ENCODE measurements at regions of chr11 and their contacts with region 1.

Region 1: DNA sequence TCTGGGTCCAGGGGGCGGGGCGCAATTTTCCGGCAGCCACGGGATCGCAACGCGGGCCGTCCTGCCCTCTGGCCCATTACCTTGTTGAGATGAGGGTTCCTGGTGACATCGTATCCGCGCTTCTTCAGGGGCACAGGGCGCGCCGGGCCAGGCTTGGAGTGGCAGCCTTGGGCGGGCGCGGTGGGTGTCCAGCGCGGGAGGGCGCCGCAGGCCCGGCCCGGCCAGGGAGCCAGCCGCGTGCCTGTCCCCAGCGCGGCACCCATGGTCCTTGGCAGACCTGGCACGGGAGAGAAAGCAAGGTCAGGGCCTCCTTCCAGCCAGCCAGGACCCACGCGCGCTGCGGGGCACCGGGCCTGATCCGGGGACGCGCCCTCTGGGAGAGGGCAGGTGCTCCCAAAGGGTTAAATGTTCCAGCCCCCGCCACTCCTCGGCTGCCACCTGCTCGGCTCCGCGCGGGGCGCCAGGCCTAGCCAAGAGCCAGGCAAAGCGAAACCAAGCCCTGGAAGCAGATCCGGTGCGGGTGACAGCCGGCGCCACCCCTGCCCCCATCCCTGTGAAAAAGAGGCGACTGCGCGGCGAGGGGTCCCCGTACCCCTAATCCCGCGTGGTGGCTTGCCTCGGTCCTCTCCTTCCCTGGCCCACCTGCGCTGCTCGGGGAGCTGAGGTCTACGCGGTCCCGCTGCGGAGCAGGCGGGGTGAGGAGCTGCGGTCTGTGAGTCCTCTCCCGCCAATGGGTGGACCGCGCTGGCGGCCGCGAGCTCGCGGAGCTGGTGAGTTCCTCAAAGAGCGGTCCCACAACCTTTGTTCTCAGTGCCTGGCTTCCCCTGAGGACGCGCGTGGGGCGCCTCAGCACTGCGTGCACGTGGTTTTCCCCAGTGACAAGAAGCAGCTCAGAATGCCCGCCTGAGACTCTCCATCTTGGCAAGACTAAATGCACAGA is at the start of gene ME3:
- DNase-seq: peak; percentile 80
- H3K4me3 ChIP-seq: peak within 1 kb of the TSS; percentile 60 to 88 (median 85)
- H3K27ac ChIP-seq: peak within 1 kb of the TSS; percentile 91
- H3K4me1 ChIP-seq: peaks cover 31% of the 10 kb centered on the region
- H3K27me3 ChIP-seq: no peaks in the 10 kb centered on the region
- CTCF ChIP-seq: no peak
- POLR2A ChIP-seq: peak; percentile 80
- total RNA-seq, gene ME3: 26.9 and 27.2 TPM in 2 replicates

Region 2: DNA sequence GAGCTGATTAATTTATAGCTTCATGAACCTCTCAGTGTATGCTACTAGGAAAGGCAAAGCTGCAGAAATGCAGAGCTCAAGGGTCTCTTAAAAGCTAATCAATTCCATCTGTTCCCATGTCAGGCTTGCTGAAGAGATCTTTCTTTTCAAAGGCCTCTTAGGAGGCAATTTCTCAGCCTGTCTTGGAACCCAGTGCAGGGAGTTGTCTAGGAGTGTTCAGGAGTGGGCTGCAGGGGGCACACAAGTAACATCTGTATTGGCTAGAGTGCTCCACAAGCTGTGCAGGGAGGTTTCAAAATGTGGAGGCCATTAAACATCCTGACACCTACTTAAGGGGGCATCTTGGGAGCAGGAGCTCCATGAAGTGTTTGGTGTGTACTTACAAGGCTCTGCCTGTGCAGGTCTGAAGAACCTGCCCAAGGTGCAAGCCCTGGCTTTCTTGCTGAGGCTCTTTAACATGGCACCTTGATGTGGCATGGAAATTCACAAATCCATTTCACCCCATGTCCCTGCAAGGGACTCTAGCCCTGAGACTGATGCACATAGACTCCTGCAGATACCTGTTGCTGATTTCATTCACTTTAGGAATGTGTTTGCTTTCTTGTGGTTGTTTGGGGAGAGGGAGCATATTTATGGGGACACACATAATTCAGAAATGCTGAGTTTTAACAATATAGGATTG is 134.3 kb before region 1 on chr11:
- CTCF ChIA-PET with region 1: no interaction called
- POLR2A ChIA-PET with region 1: no interaction called
- dilution Hi-C with region 1: no loop called
- intact Hi-C with region 1: loop called (anchors 5 kb)
- DNase-seq: peak; percentile 64
- H3K4me3 ChIP-seq: no peak overlapping the region
- H3K27ac ChIP-seq: no peak overlapping the region
- H3K4me1 ChIP-seq: no peaks in the 10 kb centered on the region
- H3K27me3 ChIP-seq: no peaks in the 10 kb centered on the region
- CTCF ChIP-seq: peak; percentile 23 to 42
- POLR2A ChIP-seq: no peak

Region 3: DNA sequence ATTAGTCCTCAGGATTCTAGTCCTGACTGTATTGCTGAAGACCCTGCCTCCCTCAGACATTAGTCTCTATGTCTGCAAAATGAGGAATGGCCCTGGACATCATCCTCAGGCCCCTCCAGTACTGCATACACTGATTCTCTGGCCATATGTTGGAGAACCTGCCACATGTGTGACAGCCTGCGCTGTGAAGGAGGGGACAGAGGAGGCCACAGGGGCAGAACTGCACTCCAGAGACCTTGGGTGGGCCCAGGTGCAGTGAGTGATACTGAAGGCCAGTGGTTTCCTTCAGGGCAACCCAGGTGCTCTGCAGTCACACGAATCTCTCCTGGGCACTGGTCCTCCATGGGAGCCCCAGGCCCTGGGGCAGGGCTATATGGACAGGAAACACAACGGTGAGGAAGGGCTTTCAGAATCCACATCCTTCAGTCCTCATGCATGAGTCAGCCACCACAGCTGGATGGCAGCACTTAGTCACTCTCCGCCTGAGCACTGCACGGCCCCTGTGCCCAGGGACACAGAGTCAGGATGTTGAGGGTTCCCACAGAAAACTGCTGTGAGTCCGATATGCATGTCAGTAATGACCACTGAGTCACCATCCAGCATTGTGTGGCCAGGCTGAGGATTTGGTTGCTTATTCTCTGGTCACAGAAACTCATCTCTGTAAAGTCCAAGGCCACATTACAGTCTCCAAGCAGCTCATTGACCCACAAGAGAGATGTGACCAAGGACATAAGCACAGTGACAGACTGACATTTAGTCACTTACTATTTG is 39.3 kb before region 1 on chr11:
- CTCF ChIA-PET with region 1: no interaction called
- POLR2A ChIA-PET with region 1: no interaction called
- dilution Hi-C with region 1: no loop called
- intact Hi-C with region 1: loop called (anchors 1 kb)
- DNase-seq: peak; percentile 96
- H3K4me3 ChIP-seq: no peak overlapping the region
- H3K27ac ChIP-seq: peak overlapping the region; percentile 83
- H3K4me1 ChIP-seq: peaks cover 19% of the 10 kb centered on the region
- H3K27me3 ChIP-seq: no peaks in the 10 kb centered on the region
- CTCF ChIP-seq: peak in 1 of 2 donors; percentile 55
- POLR2A ChIP-seq: no peak

Region 4: GRCh38 chr11:86719781-86720463 is 48.0 kb after region 1 on chr11:
- CTCF ChIA-PET with region 1: no interaction called
- POLR2A ChIA-PET with region 1: no interaction called
- dilution Hi-C with region 1: no loop called
- intact Hi-C with region 1: loop called (anchors 1 kb)
- DNase-seq: peak; percentile 87
- H3K4me3 ChIP-seq: no peak overlapping the region
- H3K27ac ChIP-seq: peak overlapping the region; percentile 87
- H3K4me1 ChIP-seq: peaks cover 31% of the 10 kb centered on the region
- H3K27me3 ChIP-seq: no peaks in the 10 kb centered on the region
- CTCF ChIP-seq: no peak
- POLR2A ChIP-seq: no peak

Region 5: DNA sequence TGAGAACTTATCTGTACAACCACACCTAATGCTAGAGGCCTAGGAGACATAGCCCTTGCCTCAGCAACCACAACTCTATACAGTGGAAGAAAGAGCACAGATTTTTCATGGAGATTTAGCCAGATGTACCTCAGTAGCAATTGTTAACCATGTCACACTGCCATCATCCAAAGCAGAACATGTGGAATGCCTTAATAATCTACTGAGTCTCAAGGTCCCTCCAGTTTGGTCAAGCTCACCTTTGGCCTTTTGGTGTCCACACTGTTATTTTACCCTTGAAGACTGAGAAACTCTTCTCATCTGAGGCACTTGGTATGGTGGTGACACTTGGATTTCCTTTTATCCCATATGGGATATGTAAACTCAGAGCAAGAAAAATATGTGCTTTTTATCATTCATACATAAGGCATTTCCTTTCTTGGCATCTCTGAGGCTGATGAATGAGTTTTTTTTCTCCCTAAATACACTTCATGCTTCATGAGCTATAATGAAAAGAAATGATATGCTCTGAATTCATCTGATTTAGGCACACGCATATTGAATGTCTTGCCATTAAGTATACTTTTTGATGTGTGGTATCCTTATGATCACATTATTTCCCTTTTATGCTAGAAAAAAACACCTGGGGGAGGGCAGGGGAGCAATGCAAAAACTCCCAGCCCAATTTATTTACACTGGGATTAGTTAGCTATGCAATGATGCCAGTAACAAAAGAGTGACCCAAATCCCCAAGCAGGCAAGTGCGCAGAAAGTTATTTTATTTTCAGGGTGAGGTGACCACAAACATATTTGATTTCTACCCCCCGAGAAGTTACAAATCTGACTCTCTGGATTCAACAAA is 63.7 kb after region 1 on chr11:
- CTCF ChIA-PET with region 1: interaction called, 10 read pairs
- POLR2A ChIA-PET with region 1: interaction called, 3 read pairs
- dilution Hi-C with region 1: no loop called
- intact Hi-C with region 1: loop called (anchors 1 kb)
- DNase-seq: peak; percentile 78
- H3K4me3 ChIP-seq: no peak overlapping the region
- H3K27ac ChIP-seq: peak overlapping the region; percentile 93
- H3K4me1 ChIP-seq: peaks cover 55% of the 10 kb centered on the region
- H3K27me3 ChIP-seq: no peaks in the 10 kb centered on the region
- CTCF ChIP-seq: no peak
- POLR2A ChIP-seq: peak; percentile 39

Region 6: GRCh38 chr11:86740709-86741483 is 68.9 kb after region 1 on chr11:
- CTCF ChIA-PET with region 1: interaction called, 10 read pairs
- POLR2A ChIA-PET with region 1: interaction called, 3 read pairs
- dilution Hi-C with region 1: no loop called
- intact Hi-C with region 1: loop called (anchors 1 kb)
- DNase-seq: peak; percentile 94
- H3K4me3 ChIP-seq: peak overlapping the region in 1 of 3 experiments; percentile 7
- H3K27ac ChIP-seq: peak overlapping the region; percentile 99
- H3K4me1 ChIP-seq: peaks cover 78% of the 10 kb centered on the region
- H3K27me3 ChIP-seq: no peaks in the 10 kb centered on the region
- CTCF ChIP-seq: no peak
- POLR2A ChIP-seq: no peak